ENCODE measurements at regions of chr9 and their contacts with region 1.

Region 1: GRCh38 chr9:6353851-6354686 is 25.9 kb downstream of the TPD52L3 start:
- DNase-seq: no peak
- ATAC-seq: peak; percentile 63 to 76 (median 67)
- H3K4me3 ChIP-seq: no peak overlapping the region
- H3K27ac ChIP-seq: no peak overlapping the region
- H3K4me1 ChIP-seq: no peaks in the 10 kb centered on the region
- H3K27me3 ChIP-seq: no peaks in the 10 kb centered on the region
- CTCF ChIP-seq: peak; percentile 71

Region 2: GRCh38 chr9:5920860-5921328 is 433.2 kb before region 1 on chr9:
- intact Hi-C with region 1: no loop called
- DNase-seq: no peak
- ATAC-seq: no peak
- H3K4me3 ChIP-seq: no peak overlapping the region
- H3K27ac ChIP-seq: no peak overlapping the region
- H3K4me1 ChIP-seq: no peaks in the 10 kb centered on the region
- H3K27me3 ChIP-seq: no peaks in the 10 kb centered on the region
- CTCF ChIP-seq: no peak

Region 3: GRCh38 chr9:6566409-6567139 is 212.5 kb after region 1 on chr9:
- intact Hi-C with region 1: loop called (anchors 2 to 5 kb)
- DNase-seq: no peak
- ATAC-seq: peak in 2 of 4 donors; percentile 58 to 59
- H3K4me3 ChIP-seq: no peak overlapping the region
- H3K27ac ChIP-seq: no peak overlapping the region
- H3K4me1 ChIP-seq: no peaks in the 10 kb centered on the region
- H3K27me3 ChIP-seq: peaks cover 0 to 2% (median 0%) of the 10 kb centered on the region in 3 donors
- CTCF ChIP-seq: no peak

Region 4: DNA sequence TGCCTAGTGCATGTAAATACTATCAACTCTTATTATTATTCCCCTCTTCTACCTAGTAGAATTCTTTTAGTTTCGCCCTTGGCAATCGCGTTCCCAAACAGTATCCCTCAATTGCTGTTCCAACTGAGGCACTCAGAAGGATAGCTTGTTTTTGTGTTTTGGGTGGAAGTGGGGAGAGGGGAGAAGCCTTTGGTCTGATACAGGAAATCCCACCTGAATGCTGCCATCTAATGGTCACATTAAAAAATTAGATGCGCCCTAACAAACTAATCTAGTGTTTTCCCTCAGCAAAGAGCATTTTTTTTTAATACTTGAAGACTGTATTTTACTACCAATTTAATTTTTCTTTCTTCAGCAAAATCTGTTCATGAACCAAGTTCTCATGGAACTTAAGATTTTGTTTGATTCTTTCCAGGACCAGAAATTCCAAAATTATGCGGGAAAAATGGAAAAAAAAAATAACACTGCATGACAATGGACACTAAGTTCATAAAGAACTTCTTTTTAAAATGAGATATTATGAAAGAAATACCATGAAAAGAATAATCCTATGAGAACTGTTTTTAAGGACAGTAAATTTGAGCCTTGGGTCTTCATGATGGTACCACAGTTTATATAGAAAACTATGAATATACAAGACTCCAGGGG is 313.7 kb after region 1 on chr9:
- intact Hi-C with region 1: loop called (anchors 5 to 10 kb)
- DNase-seq: no peak
- ATAC-seq: peak in 1 of 4 donors; percentile 61
- H3K4me3 ChIP-seq: no peak overlapping the region
- H3K27ac ChIP-seq: no peak overlapping the region
- H3K4me1 ChIP-seq: no peaks in the 10 kb centered on the region
- H3K27me3 ChIP-seq: no peaks in the 10 kb centered on the region
- CTCF ChIP-seq: peak; percentile 52

Region 5: GRCh38 chr9:6673326-6674025 is 319.4 kb after region 1 on chr9:
- intact Hi-C with region 1: loop called (anchors 5 to 10 kb)
- DNase-seq: no peak
- ATAC-seq: no peak
- H3K4me3 ChIP-seq: no peak overlapping the region
- H3K27ac ChIP-seq: no peak overlapping the region
- H3K4me1 ChIP-seq: no peaks in the 10 kb centered on the region
- H3K27me3 ChIP-seq: no peaks in the 10 kb centered on the region
- CTCF ChIP-seq: no peak